ENCODE measurements at regions of chr7 and their contacts with region 1.

Region 1: DNA sequence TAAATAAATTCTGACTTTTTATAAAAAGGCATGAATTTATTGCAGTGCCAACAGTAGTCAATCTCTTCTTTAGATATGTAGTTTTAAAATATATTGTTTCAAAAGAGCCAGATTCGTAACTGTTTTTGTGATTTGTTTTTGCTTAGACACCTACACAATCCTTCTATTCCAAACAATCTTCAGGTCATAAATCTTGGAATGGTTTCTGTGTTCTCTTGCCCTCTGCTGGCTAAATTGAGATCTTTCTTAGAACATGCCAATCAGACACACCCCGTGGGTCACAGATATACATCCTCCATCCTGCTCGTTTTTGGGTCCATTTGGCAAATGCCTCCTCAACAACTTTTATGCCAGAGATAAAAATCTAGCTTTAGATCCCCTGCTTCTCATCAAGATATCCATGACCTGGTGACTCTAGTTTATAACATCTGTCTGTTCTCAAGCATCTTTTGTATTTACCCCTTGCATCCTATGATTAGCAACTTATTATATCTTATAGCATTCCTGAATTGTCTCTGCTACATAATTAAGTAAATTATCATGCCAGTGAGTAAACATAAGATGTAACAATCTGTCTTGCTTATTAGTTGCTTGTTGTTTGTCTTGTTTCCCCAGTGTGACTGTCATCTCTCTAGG is 35.3 kb upstream of the IFRD1 start:
- DNase-seq: no peak
- ATAC-seq: peak in 3 of 4 donors; percentile 54 to 62 (median 60)
- H3K4me3 ChIP-seq: no peak overlapping the region
- H3K27ac ChIP-seq: no peak overlapping the region
- H3K4me1 ChIP-seq: peaks cover 0 to 8% (median 0%) of the 10 kb centered on the region in 12 donors
- H3K27me3 ChIP-seq: no peaks in the 10 kb centered on the region
- CTCF ChIP-seq: peak; percentile 36 to 66 (median 51)
- POLR2A ChIP-seq: no peak

Region 2: DNA sequence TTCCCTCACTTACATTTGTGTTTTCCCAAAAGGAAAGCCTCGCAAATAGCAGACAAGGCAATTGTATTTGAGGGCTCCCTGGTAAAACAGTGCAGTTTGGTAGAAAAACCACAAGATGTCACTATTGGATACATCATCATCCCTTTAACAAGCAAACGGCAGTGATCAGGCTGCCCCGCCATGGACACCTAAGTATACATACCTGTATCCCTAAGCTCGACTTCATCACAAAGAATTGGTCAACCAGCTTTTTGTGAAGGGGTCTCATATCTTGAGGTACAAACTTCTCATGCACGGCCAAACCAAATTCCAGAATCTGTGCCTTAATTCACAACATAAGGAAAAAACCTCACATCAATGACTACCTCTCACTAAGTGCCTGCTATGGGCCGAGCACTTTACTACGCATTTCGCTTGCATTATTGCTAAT is 673.1 kb before region 1 on chr7:
- intact Hi-C with region 1: loop called in 1 of 10 experiments (anchors 5 kb)
- DNase-seq: peak in 1 of 5 donors; percentile 46
- ATAC-seq: peak; percentile 42 to 78 (median 68)
- H3K4me3 ChIP-seq: no peak overlapping the region
- H3K27ac ChIP-seq: no peak overlapping the region
- H3K4me1 ChIP-seq: peaks cover 0 to 7% (median 0%) of the 10 kb centered on the region in 12 donors
- H3K27me3 ChIP-seq: no peaks in the 10 kb centered on the region
- CTCF ChIP-seq: peak; percentile 47 to 75 (median 60)
- POLR2A ChIP-seq: no peak

Region 3: DNA sequence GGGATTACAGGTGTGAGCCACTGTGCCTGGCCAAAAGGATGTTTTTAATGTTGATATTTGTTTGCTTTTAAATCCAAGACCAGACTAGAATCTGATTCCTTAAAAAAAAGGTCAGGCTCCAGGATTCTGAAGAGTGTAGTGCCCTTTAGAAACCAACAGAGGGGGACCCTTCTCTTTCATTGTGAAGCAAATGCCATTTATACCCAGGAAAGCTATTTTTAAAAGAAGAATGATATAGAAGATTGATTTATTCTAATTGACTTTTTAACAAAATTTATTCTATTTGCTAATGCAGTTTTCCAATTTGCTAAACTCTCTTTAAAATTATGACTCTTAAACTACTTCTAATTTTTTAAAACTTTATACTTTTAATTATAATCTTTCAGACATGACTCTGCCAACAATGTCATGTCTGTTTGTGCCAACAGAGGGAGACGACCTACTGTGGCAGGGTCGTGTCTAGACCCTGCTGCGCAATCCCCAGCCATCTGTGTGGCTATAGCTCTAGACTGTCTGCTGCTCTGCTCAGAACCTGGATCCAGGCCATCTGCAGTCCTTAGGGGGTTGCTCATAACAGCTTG is 651.7 kb before region 1 on chr7:
- intact Hi-C with region 1: loop called in 7 of 10 experiments (anchors 5 to 10 kb)
- DNase-seq: no peak
- ATAC-seq: peak in 2 of 4 donors; percentile 47 to 67
- H3K4me3 ChIP-seq: no peak overlapping the region
- H3K27ac ChIP-seq: no peak overlapping the region
- H3K4me1 ChIP-seq: peaks cover 0 to 10% (median 0%) of the 10 kb centered on the region in 12 donors
- H3K27me3 ChIP-seq: no peaks in the 10 kb centered on the region
- CTCF ChIP-seq: peak; percentile 35 to 72 (median 60)
- POLR2A ChIP-seq: no peak

Region 4: DNA sequence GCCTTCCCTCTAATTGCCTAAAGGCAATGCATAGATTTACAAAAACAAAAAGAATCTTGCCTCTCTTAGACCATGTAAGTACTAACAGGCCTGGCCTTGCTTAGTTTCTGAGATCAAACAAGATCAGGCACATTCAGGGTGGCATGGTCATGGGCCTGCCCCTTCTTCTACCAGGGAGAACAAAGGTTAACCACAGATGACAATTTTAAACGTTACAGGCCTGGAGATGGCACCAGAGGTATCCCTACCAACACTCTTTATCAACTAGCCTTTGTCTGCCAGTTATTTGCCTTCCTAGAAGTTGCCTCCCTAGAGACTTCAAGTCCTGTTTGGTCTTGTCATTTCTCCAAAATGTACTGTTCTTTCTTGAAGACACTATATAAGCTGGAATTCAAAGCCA is 461.4 kb before region 1 on chr7:
- intact Hi-C with region 1: loop called in 6 of 10 experiments (anchors 5 to 10 kb)
- DNase-seq: peak in 1 of 5 donors; percentile 15
- ATAC-seq: peak; percentile 75 to 82 (median 79)
- H3K4me3 ChIP-seq: no peak overlapping the region
- H3K27ac ChIP-seq: peak overlapping the region in 3 of 12 donors; percentile 5 to 77 (median 63)
- H3K4me1 ChIP-seq: peaks cover 0 to 42% (median 22%) of the 10 kb centered on the region in 12 donors
- H3K27me3 ChIP-seq: no peaks in the 10 kb centered on the region
- CTCF ChIP-seq: peak in 9 of 12 donors; percentile 23 to 41 (median 30)
- POLR2A ChIP-seq: no peak

Region 5: GRCh38 chr7:112226701-112227276 is 188.2 kb before region 1 on chr7:
- intact Hi-C with region 1: no loop called
- DNase-seq: no peak
- ATAC-seq: no peak
- H3K4me3 ChIP-seq: no peak overlapping the region
- H3K27ac ChIP-seq: no peak overlapping the region
- H3K4me1 ChIP-seq: peaks cover 0 to 31% (median 13%) of the 10 kb centered on the region in 12 donors
- H3K27me3 ChIP-seq: no peaks in the 10 kb centered on the region
- CTCF ChIP-seq: no peak
- POLR2A ChIP-seq: no peak

Region 6: DNA sequence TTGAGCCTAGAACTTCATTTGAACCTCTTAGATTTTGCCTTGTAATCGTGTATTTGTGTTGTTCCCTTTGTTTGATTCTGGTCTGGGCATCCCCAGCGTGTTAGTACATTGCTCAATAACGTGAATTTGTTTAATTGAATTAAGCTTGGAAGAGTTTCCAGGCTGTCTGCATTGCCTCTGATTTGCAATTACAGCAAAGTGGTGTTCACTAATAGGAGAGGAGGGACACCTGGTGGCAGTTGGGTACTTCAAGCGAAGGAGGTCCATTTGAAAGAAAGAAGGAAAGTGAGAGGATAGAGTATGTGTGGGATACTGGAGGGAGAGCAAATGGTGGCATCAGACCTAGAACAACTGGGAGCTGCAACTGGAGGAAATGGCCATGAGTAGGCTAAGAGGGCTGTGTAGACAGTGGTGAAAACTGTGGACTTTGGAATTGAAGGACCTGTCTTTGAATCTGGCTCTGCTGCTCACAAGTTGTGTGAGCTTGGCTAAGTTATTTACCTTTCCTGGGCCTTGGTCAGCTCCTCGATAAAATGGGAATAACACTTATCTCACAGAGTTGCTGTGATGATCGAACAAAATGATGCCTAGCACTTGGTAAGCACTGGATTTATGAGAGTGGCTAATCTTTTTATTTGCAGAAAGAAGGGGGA is 81.0 kb after region 1 on chr7:
- intact Hi-C with region 1: loop called in 3 of 10 experiments (anchors 5 kb)
- DNase-seq: peak in 2 of 5 donors; percentile 46 to 55
- ATAC-seq: peak; percentile 52 to 90 (median 89)
- H3K4me3 ChIP-seq: no peak overlapping the region
- H3K27ac ChIP-seq: peak overlapping the region in 1 of 12 donors; percentile 30
- H3K4me1 ChIP-seq: no peaks in the 10 kb centered on the region
- H3K27me3 ChIP-seq: no peaks in the 10 kb centered on the region
- CTCF ChIP-seq: peak; percentile 35 to 70 (median 62)
- POLR2A ChIP-seq: no peak

Region 7: GRCh38 chr7:112723416-112723815 is 308.4 kb after region 1 on chr7:
- intact Hi-C with region 1: no loop called
- DNase-seq: no peak
- ATAC-seq: no peak
- H3K4me3 ChIP-seq: no peak overlapping the region
- H3K27ac ChIP-seq: no peak overlapping the region
- H3K4me1 ChIP-seq: peaks cover 0 to 12% (median 0%) of the 10 kb centered on the region in 12 donors
- H3K27me3 ChIP-seq: no peaks in the 10 kb centered on the region
- CTCF ChIP-seq: no peak
- POLR2A ChIP-seq: no peak